ENCODE measurements at regions of chr2 and their contacts with region 1.

Region 1: GRCh38 chr2:66434679-66435548 is at the start of gene MEIS1:
- DNase-seq: peak; percentile 75 to 80
- H3K4me3 ChIP-seq: peak within 1 kb of the TSS; percentile 16 to 59 (median 44)
- H3K27ac ChIP-seq: peak within 1 kb of the TSS; percentile 64 to 81 (median 73)
- H3K4me1 ChIP-seq: peaks cover 4 to 21% of the 10 kb centered on the region in 2 donors
- H3K27me3 ChIP-seq: peaks cover 6% of the 10 kb centered on the region
- CTCF ChIP-seq: no peak
- POLR2A ChIP-seq: peak; percentile 25 to 76
- total RNA-seq, gene MEIS1: 6.8 to 11.8 (median 9.4) TPM

Region 2: DNA sequence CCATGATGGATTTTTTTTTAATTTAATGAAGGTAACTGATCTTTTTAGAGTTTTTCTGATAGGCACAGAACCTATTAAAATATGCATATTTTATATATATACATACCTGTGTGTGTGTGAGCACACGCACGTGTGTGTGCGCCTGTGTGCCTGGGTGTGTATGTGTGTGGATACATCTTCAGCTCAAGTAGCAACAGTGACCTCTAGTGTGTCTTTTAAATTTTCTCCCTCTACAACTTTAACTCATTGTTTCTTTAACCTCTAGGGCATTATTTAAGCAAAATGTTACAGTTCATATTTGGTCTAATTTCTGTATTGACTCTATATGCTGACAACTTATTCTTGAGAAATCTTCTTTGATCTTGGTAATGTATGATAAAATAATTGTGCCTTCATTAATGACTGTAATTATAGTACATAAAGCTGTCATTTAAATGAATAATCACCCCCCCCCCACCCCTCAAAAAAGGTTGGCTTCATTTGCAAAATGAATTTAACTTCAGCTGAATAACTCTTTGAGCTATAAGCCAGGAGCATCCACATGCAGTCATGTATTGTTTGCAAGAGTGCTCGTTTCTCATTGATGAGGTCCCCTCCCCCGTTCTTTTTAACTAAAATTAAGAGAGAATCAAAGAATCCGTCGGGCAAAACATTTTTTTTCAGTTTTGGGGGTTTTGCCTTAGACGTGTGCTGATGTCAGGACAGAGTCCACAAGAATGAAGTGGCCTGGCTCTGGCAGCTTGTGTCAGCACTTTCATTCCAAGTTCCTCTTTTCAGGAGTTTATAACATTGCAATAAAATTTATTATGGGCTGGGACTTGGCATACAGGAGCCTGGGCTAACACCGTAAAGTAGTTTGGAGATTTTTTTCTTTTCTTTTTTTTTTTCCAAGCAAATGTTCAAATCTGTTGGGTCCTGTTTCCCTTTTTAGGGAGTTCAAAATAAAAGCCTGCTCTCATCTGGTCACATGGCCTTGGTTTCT is 1042.2 kb after region 1 on chr2:
- intact Hi-C with region 1: loop called (anchors 10 kb)
- DNase-seq: peak; percentile 5
- H3K4me3 ChIP-seq: no peak overlapping the region
- H3K27ac ChIP-seq: no peak overlapping the region
- H3K4me1 ChIP-seq: no peaks in the 10 kb centered on the region
- H3K27me3 ChIP-seq: no peaks in the 10 kb centered on the region
- CTCF ChIP-seq: peak in 5 of 6 experiments; percentile 33 to 77 (median 55)
- POLR2A ChIP-seq: no peak

Measured in thyroid gland (tissue), 4 donors.